ENCODE measurements at regions of chr2 and their contacts with region 1.

Region 1: DNA sequence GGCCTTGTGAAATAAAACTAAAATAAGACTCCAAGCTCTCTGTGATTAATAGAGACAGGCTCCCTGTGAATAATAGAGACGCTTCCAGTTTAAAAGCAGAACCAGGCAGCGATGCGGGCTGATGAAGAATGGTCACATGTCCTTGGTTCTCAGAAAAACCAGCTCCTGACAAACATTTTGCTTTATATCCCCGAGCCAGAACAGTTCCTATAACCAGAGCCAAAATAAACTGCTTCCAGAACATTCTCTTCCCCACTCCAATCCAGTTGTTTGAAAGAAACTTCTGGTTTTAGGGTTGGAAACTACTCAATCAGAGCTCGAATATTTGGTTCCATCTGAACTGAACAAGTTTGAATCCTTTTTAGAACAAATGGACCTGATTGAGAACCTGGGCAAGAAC is 213.7 kb downstream of the TSN start:
- DNase-seq: peak in 1 of 2 donors; percentile 28
- ATAC-seq: peak; percentile 52 to 81
- H3K4me3 ChIP-seq: no peak overlapping the region
- H3K27ac ChIP-seq: peak overlapping the region; percentile 48 to 62 (median 54)
- H3K4me1 ChIP-seq: no peaks in the 10 kb centered on the region
- H3K27me3 ChIP-seq: no peaks in the 10 kb centered on the region
- CTCF ChIP-seq: no peak
- POLR2A ChIP-seq: no peak

Region 2: GRCh38 chr2:121649596-121650314 is 319.4 kb before region 1 on chr2:
- in situ Hi-C with region 1: no loop called
- intact Hi-C with region 1: no loop called
- DNase-seq: peak; percentile 96 to 98
- ATAC-seq: peak; percentile 86 to 87
- H3K4me3 ChIP-seq: peak overlapping the region; percentile 76 to 99 (median 96)
- H3K27ac ChIP-seq: peak overlapping the region; percentile 95 to 100 (median 98)
- H3K4me1 ChIP-seq: peaks cover 47 to 48% of the 10 kb centered on the region in 2 donors
- H3K27me3 ChIP-seq: no peaks in the 10 kb centered on the region
- CTCF ChIP-seq: peak in 1 of 5 experiments; percentile 32
- POLR2A ChIP-seq: peak in 1 of 2 donors; percentile 9

Region 3: DNA sequence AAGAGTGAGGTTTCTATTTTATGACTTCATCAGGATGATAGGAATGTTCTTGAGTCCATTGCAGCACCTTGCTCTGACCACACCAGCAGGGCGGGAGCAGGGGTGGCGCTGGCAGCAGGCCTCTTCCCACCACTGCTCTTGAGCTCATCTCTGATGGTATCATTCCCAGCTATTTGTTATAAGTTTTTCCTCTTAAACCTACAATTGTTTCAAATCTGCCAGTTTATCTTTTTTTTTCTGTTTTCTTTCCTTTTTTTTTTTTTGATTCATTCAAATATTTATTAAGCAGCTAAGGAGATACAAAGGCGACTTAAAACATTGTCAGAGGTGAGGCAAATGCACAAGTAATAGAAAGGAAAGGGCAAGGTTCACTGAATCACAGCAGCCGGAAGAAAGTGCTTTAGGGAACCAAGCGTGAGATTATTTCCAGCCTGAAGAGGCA is 261.2 kb before region 1 on chr2:
- in situ Hi-C with region 1: no loop called
- intact Hi-C with region 1: no loop called
- DNase-seq: no peak
- ATAC-seq: no peak
- H3K4me3 ChIP-seq: no peak overlapping the region
- H3K27ac ChIP-seq: no peak overlapping the region
- H3K4me1 ChIP-seq: no peaks in the 10 kb centered on the region
- H3K27me3 ChIP-seq: no peaks in the 10 kb centered on the region
- CTCF ChIP-seq: no peak
- POLR2A ChIP-seq: no peak

Region 4: GRCh38 chr2:121831841-121832240 is 137.3 kb before region 1 on chr2:
- in situ Hi-C with region 1: no loop called
- intact Hi-C with region 1: loop called (anchors 5 kb)
- DNase-seq: peak in 1 of 2 donors; percentile 49
- ATAC-seq: peak in 1 of 2 donors; percentile 58
- H3K4me3 ChIP-seq: no peak overlapping the region
- H3K27ac ChIP-seq: peak overlapping the region in 2 of 4 donors; percentile 12 to 44
- H3K4me1 ChIP-seq: no peaks in the 10 kb centered on the region
- H3K27me3 ChIP-seq: no peaks in the 10 kb centered on the region
- CTCF ChIP-seq: no peak
- POLR2A ChIP-seq: no peak

Region 5: DNA sequence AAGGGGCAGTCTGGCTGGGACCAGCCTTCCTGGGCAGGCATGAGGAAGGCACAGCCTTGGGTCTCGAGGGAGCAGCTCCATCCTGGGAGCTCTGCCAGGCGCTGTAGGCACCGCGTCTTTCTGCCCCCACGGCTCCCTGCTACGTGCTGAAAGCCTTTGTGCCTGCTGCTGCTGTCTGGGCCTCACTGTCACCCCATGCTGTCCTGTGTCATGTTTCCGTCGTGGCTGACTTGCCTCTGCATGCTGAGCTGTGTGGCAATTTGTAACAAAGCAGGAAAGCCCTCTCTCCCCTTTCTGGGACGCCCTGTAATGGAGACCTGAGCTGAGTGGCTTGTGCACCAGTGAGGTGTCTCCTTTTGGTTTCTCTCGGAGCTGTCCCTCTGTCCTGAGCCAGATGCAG is 61.2 kb before region 1 on chr2:
- in situ Hi-C with region 1: no loop called
- intact Hi-C with region 1: no loop called
- DNase-seq: no peak
- ATAC-seq: no peak
- H3K4me3 ChIP-seq: no peak overlapping the region
- H3K27ac ChIP-seq: no peak overlapping the region
- H3K4me1 ChIP-seq: no peaks in the 10 kb centered on the region
- H3K27me3 ChIP-seq: peaks cover 0 to 11% (median 0%) of the 10 kb centered on the region in 3 donors
- CTCF ChIP-seq: no peak
- POLR2A ChIP-seq: no peak

Region 6: GRCh38 chr2:122156176-122156890 is 187.2 kb after region 1 on chr2:
- in situ Hi-C with region 1: no loop called
- intact Hi-C with region 1: no loop called
- DNase-seq: no peak
- ATAC-seq: no peak
- H3K4me3 ChIP-seq: no peak overlapping the region
- H3K27ac ChIP-seq: no peak overlapping the region
- H3K4me1 ChIP-seq: no peaks in the 10 kb centered on the region
- H3K27me3 ChIP-seq: no peaks in the 10 kb centered on the region
- CTCF ChIP-seq: no peak
- POLR2A ChIP-seq: no peak

Measured in gastrocnemius medialis (tissue), 4 donors.